ENCODE measurements at regions of chr4 and their contacts with region 1.

Region 1: DNA sequence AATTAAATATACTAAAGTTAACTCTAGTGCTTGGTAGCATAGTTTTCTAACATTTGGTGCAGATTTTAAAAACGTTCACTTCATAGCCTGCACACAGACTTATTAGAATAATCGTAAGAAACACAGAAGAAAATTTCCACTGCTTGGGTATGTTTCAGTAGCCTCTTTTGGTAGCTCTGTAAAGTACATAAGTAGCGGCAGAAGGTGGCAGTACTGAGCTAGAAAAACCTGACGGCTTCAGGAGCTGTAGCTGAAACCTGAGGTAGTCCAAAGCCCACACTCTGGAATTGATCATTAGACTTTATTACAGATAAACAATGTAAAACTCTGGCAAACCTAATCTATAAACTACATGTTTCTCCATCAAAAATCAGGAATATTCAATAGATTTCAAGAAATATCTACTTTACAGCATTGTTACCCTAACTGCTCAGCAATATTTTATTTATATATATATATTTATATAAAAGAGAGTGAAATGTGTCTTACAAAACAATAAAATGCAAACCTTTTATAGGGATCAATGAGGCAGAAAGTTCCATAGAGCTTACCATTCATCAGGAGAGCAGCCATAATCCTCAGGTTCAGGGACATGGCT is 88.2 kb downstream of the ATP8A1 start:
- DNase-seq: peak; percentile 37 to 51
- ATAC-seq: peak; percentile 92 to 93
- H3K4me3 ChIP-seq: no peak overlapping the region
- H3K27ac ChIP-seq: peak overlapping the region in 2 of 4 donors; percentile 64 to 65
- H3K4me1 ChIP-seq: peaks cover 19 to 26% of the 10 kb centered on the region in 2 donors
- H3K27me3 ChIP-seq: no peaks in the 10 kb centered on the region
- CTCF ChIP-seq: peak; percentile 69 to 82 (median 74)
- POLR2A ChIP-seq: no peak

Region 2: DNA sequence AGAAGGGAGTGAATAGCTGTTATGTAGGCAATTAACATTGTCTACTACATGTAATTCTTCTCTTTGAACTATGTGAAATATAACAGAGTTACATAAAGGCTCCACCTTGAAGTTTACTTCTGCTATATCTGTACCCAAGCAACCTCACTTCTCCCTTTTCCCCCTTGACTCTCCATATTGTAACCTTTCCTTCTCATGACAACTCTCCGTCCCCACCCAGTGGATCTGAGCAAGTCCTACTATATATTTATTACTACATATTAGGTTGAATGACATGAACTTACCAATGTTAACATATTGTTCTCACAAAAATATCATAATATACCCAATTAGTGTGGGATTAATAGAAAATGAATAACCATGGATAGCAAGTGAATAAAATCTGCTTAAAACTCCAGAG is 181.4 kb after region 1 on chr4:
- in situ Hi-C with region 1: loop called in 1 of 4 experiments (anchors 10 kb)
- intact Hi-C with region 1: loop called (anchors 1 kb)
- DNase-seq: no peak
- ATAC-seq: peak; percentile 64 to 69
- H3K4me3 ChIP-seq: no peak overlapping the region
- H3K27ac ChIP-seq: no peak overlapping the region
- H3K4me1 ChIP-seq: no peaks in the 10 kb centered on the region
- H3K27me3 ChIP-seq: no peaks in the 10 kb centered on the region
- CTCF ChIP-seq: peak in 3 of 5 experiments; percentile 5 to 39 (median 21)
- POLR2A ChIP-seq: no peak

Region 3: GRCh38 chr4:42819863-42820514 is 251.3 kb after region 1 on chr4:
- in situ Hi-C with region 1: no loop called
- intact Hi-C with region 1: loop called (anchors 2 kb)
- DNase-seq: no peak
- ATAC-seq: no peak
- H3K4me3 ChIP-seq: no peak overlapping the region
- H3K27ac ChIP-seq: no peak overlapping the region
- H3K4me1 ChIP-seq: peaks cover 0 to 4% of the 10 kb centered on the region in 2 donors
- H3K27me3 ChIP-seq: no peaks in the 10 kb centered on the region
- CTCF ChIP-seq: no peak
- POLR2A ChIP-seq: no peak

Region 4: GRCh38 chr4:42855779-42856178 is 287.1 kb after region 1 on chr4:
- in situ Hi-C with region 1: loop called (anchors 5 to 10 kb)
- intact Hi-C with region 1: no loop called
- DNase-seq: no peak
- ATAC-seq: no peak
- H3K4me3 ChIP-seq: no peak overlapping the region
- H3K27ac ChIP-seq: no peak overlapping the region
- H3K4me1 ChIP-seq: no peaks in the 10 kb centered on the region
- H3K27me3 ChIP-seq: no peaks in the 10 kb centered on the region
- CTCF ChIP-seq: no peak
- POLR2A ChIP-seq: no peak

Region 5: GRCh38 chr4:42865572-42866189 is 297.0 kb after region 1 on chr4:
- in situ Hi-C with region 1: loop called in 3 of 4 experiments (anchors 5 to 10 kb)
- intact Hi-C with region 1: loop called (anchors 1 kb)
- DNase-seq: peak in 1 of 2 donors; percentile 23
- ATAC-seq: peak in 1 of 2 donors; percentile 45
- H3K4me3 ChIP-seq: no peak overlapping the region
- H3K27ac ChIP-seq: no peak overlapping the region
- H3K4me1 ChIP-seq: no peaks in the 10 kb centered on the region
- H3K27me3 ChIP-seq: no peaks in the 10 kb centered on the region
- CTCF ChIP-seq: peak; percentile 59 to 80 (median 65)
- POLR2A ChIP-seq: no peak

Region 6: DNA sequence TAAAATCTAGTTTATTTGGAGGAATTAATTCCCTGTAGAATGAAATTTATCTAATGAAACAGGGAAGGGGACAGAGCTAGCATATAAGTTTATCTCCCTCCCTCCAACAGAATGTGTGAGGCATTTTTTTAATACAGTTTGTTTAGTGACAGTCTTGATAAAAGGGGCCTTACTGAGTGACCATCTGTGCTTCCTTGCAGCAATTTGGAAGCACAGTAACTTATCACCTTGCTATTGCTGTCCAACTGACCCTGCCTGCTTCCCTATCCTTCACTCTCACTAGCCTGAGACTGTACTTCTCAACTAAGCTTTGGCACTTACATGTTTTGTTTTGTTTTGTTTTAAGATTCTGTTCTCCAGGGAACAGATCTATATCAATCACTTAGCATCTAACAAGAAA is 1911.0 kb after region 1 on chr4:
- in situ Hi-C with region 1: no loop called
- intact Hi-C with region 1: no loop called
- DNase-seq: no peak
- ATAC-seq: no peak
- H3K4me3 ChIP-seq: no peak overlapping the region
- H3K27ac ChIP-seq: no peak overlapping the region
- H3K4me1 ChIP-seq: no peaks in the 10 kb centered on the region
- H3K27me3 ChIP-seq: no peaks in the 10 kb centered on the region
- CTCF ChIP-seq: no peak
- POLR2A ChIP-seq: no peak

Measured in gastrocnemius medialis (tissue), 4 donors.